HepG2 (cell line): ENCODE measurements at regions of chr19 and their contacts with region 1.

Region 1: GRCh38 chr19:11035441-11036377 is 53.6 kb upstream of the LDLR start:
- DNase-seq: peak; percentile 81
- ATAC-seq: peak; percentile 96
- H3K4me3 ChIP-seq: no peak overlapping the region
- H3K27ac ChIP-seq: no peak overlapping the region
- H3K4me1 ChIP-seq: no peaks in the 10 kb centered on the region
- H3K27me3 ChIP-seq: no peaks in the 10 kb centered on the region
- CTCF ChIP-seq: peak; percentile 96
- EP300 ChIP-seq: no peak
- POLR2A ChIP-seq: no peak
- RAD21 ChIP-seq: peak; percentile 91

Region 2: DNA sequence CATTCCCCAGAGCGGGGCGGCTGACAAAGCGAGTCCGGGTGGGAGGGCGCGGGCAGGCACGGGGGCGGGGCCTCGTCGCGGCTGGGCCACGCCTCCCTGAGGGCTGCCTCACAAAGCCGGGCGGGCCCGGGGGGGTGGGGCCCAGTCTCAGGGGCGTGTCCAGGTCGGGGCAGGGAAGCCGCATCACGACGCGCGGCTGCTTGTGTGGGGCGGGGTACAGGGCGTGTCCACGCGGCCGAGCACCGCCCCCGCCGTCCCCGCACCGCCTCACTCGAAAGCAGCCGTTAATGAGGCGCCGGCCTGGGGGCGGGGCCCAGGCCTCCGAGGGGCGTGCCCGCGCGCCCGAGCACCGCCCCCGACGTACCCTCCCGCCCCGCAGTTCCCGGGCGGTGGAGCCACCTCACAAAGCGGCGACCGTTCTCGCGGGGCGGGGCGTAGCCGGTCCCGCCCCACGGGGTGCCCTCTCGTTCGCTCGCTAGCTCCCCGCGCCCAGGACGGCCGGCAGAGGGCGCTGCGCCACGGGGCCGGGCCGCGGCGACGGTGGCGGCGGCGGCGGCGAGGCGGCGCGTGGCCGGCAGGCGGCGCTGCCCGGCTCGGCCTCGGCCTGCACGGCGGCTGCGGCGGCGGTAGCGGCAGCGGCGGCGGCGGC is 164.6 kb before region 1 on chr19 and contains the start of gene CARM1:
- CTCF ChIA-PET with region 1: no interaction called
- POLR2A ChIA-PET with region 1: no interaction called
- in situ Hi-C with region 1: no loop called
- intact Hi-C with region 1: no loop called
- DNase-seq: peak; percentile 92
- ATAC-seq: peak; percentile 81
- H3K4me3 ChIP-seq: peak within 1 kb of the TSS; percentile 85 to 96 (median 87)
- H3K27ac ChIP-seq: peak within 1 kb of the TSS; percentile 60
- H3K4me1 ChIP-seq: peaks cover 54% of the 10 kb centered on the region
- H3K27me3 ChIP-seq: no peaks in the 10 kb centered on the region
- CTCF ChIP-seq: peak; percentile 76
- EP300 ChIP-seq: no peak
- POLR2A ChIP-seq: no peak
- RAD21 ChIP-seq: no peak
- total RNA-seq, gene CARM1: 21.9 and 27.6 TPM in 2 replicates

Region 3: GRCh38 chr19:10899151-10899653 is 136.5 kb before region 1 on chr19:
- CTCF ChIA-PET with region 1: no interaction called
- POLR2A ChIA-PET with region 1: no interaction called
- in situ Hi-C with region 1: no loop called
- intact Hi-C with region 1: no loop called
- DNase-seq: no peak
- ATAC-seq: no peak
- H3K4me3 ChIP-seq: no peak overlapping the region
- H3K27ac ChIP-seq: no peak overlapping the region
- H3K4me1 ChIP-seq: peaks cover 15% of the 10 kb centered on the region
- H3K27me3 ChIP-seq: no peaks in the 10 kb centered on the region
- CTCF ChIP-seq: no peak
- EP300 ChIP-seq: no peak
- POLR2A ChIP-seq: no peak
- RAD21 ChIP-seq: no peak

Region 4: GRCh38 chr19:10975374-10976130 is 60.2 kb before region 1 on chr19:
- CTCF ChIA-PET with region 1: no interaction called
- POLR2A ChIA-PET with region 1: no interaction called
- in situ Hi-C with region 1: no loop called
- intact Hi-C with region 1: no loop called
- DNase-seq: no peak
- ATAC-seq: no peak
- H3K4me3 ChIP-seq: no peak overlapping the region
- H3K27ac ChIP-seq: peak overlapping the region; percentile 48
- H3K4me1 ChIP-seq: peaks cover 30% of the 10 kb centered on the region
- H3K27me3 ChIP-seq: no peaks in the 10 kb centered on the region
- CTCF ChIP-seq: no peak
- EP300 ChIP-seq: no peak
- POLR2A ChIP-seq: no peak
- RAD21 ChIP-seq: no peak

Region 5: DNA sequence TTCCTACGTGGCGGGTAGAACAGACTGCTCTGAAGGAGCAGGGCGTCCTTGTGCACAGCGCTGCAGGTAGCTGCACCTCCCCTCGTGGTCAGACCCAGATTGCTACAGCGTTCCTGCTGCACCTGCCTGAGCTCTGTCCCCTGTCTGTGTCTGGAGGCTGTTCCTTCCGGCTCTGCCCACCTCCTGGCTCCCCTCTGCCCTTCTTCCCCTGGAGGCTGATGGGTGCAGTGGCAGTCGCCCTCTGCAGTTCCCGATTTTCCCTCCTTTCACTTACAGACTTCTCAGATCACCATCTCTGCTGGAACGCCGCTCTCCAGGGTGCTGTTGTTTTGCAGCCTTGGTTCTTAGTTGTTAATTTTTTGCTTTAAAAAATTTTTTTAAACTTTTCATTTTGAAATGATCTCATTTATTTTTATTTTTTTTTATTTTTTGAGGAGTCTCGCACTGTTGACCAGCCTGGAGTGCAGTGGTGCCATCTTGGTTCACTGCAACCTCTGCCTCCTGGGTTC is 21.3 kb before region 1 on chr19:
- CTCF ChIA-PET with region 1: no interaction called
- POLR2A ChIA-PET with region 1: no interaction called
- in situ Hi-C with region 1: no loop called
- intact Hi-C with region 1: no loop called
- DNase-seq: no peak
- ATAC-seq: no peak; the same call in 1 of the 3 replicates
- H3K4me3 ChIP-seq: no peak overlapping the region
- H3K27ac ChIP-seq: no peak overlapping the region
- H3K4me1 ChIP-seq: no peaks in the 10 kb centered on the region
- H3K27me3 ChIP-seq: no peaks in the 10 kb centered on the region
- CTCF ChIP-seq: no peak
- EP300 ChIP-seq: no peak
- POLR2A ChIP-seq: no peak
- RAD21 ChIP-seq: no peak

Region 6: GRCh38 chr19:11090054-11090900 is 54.6 kb after region 1 on chr19:
- CTCF ChIA-PET with region 1: interaction called, 3 read pairs
- POLR2A ChIA-PET with region 1: interaction called, 8 read pairs
- in situ Hi-C with region 1: no loop called
- intact Hi-C with region 1: loop called (anchors 1 kb)
- DNase-seq: peak; percentile 92
- ATAC-seq: peak; percentile 88
- H3K4me3 ChIP-seq: peak overlapping the region; percentile 93 to 94 (median 93)
- H3K27ac ChIP-seq: peak overlapping the region; percentile 100
- H3K4me1 ChIP-seq: peaks cover 64% of the 10 kb centered on the region
- H3K27me3 ChIP-seq: no peaks in the 10 kb centered on the region; a peak in 1 of 5 replicates
- CTCF ChIP-seq: peak; percentile 41; the same call in 1 of the 2 replicates
- EP300 ChIP-seq: no peak
- POLR2A ChIP-seq: peak; percentile 90 to 98
- RAD21 ChIP-seq: peak; percentile 45